ENCODE measurements at regions of chr15 and their contacts with region 1.

Region 1: DNA sequence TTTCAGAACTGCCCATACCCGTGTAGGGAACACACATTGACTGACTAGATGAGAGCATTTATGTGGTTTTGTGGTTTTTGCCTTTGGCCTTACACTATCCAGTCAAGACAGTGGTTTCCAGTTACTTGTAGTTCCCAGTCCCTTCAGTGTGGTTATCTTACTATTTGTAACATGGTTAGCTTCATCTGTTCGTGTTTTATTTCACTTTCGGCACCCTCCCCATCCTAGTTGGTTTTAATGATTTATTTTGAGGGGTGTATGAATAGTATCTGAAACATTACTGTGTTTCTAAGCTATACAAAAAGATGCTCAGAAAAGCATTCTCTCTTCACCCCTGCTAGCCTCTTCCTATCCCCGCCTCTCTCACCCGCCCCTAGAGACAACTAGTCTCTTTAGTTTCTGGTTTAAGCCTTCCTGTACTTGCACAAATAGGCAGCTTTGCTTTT is 14.1 kb downstream of the LYSMD4 start:
- DNase-seq: no peak
- H3K4me3 Mint-ChIP-seq: peak overlapping the region; percentile 62
- H3K27ac Mint-ChIP-seq: peak overlapping the region; percentile 46
- H3K4me1 Mint-ChIP-seq: peaks cover 34% of the 10 kb centered on the region
- H3K27me3 Mint-ChIP-seq: no peaks in the 10 kb centered on the region

Region 2: GRCh38 chr15:99733268-99734039 is 14.3 kb after region 1 on chr15 and contains the start of gene LYSMD4:
- intact Hi-C with region 1: loop called (anchors 1 kb)
- DNase-seq: peak; percentile 99
- H3K4me3 Mint-ChIP-seq: peak within 1 kb of the TSS; percentile 86
- H3K27ac Mint-ChIP-seq: peak within 1 kb of the TSS; percentile 96
- H3K4me1 Mint-ChIP-seq: peaks cover 27% of the 10 kb centered on the region
- H3K27me3 Mint-ChIP-seq: no peaks in the 10 kb centered on the region
- total RNA-seq, gene LYSMD4: 6.4 and 6.6 TPM in 2 replicates

Region 3: GRCh38 chr15:99755692-99756409 is 36.7 kb after region 1 on chr15:
- intact Hi-C with region 1: loop called (anchors 1 kb)
- DNase-seq: peak; percentile 83
- H3K4me3 Mint-ChIP-seq: no peak overlapping the region
- H3K27ac Mint-ChIP-seq: no peak overlapping the region
- H3K4me1 Mint-ChIP-seq: peaks cover 5% of the 10 kb centered on the region
- H3K27me3 Mint-ChIP-seq: peaks cover 4% of the 10 kb centered on the region

Measured in activated CD4-positive, alpha-beta T cell treated with anti-CD3 and anti-CD28 coated beads, Interleukin-2, amount 10 ng/mL, durations not matched to agents 24 days and 14 days (primary cell).